ENCODE measurements at regions of chr1 and their contacts with region 1.

Region 1: GRCh38 chr1:221794079-221794670 is 52.3 kb upstream of the DUSP10 start:
- DNase-seq: peak in 1 of 2 donors; percentile 79
- ATAC-seq: peak; percentile 76 to 89 (median 82)
- H3K4me3 ChIP-seq: no peak overlapping the region
- H3K4me3 Mint-ChIP-seq: peak overlapping the region; percentile 65
- H3K27ac ChIP-seq: peak overlapping the region; percentile 57
- H3K27ac Mint-ChIP-seq: peak overlapping the region; percentile 88 to 90
- H3K4me1 ChIP-seq: peaks cover 16% of the 10 kb centered on the region
- H3K4me1 Mint-ChIP-seq: peaks cover 19 to 26% of the 10 kb centered on the region in 2 donors
- H3K27me3 ChIP-seq: no peaks in the 10 kb centered on the region
- H3K27me3 Mint-ChIP-seq: no peaks in the 10 kb centered on the region
- CTCF ChIP-seq: no peak

Region 2: DNA sequence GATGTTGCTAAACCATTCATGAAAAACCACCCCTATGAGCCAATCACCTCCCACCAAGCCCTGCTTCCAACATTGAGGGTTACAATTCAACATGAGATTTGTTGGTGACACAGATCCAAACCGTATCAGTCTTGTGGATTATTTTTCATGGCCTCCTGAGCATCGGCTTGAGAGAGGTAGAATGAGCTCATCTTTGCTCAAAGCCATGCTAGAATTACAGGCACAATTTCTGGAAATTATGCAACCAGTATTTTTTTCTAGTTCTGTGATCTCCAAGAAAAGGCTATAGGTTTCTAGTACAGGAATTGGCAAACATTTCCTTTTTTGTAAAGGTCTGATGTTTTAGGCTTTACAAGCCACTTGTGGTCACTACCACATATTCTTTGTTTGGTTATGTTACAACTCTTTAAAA is 271.6 kb before region 1 on chr1:
- intact Hi-C with region 1: loop called (anchors 5 kb)
- DNase-seq: no peak
- ATAC-seq: peak in 1 of 3 donors; percentile 42
- H3K4me3 ChIP-seq: no peak overlapping the region
- H3K4me3 Mint-ChIP-seq: no peak overlapping the region
- H3K27ac ChIP-seq: no peak overlapping the region
- H3K27ac Mint-ChIP-seq: peak overlapping the region; percentile 89 to 94
- H3K4me1 ChIP-seq: peaks cover 19% of the 10 kb centered on the region
- H3K4me1 Mint-ChIP-seq: peaks cover 24 to 25% of the 10 kb centered on the region in 2 donors
- H3K27me3 ChIP-seq: no peaks in the 10 kb centered on the region
- H3K27me3 Mint-ChIP-seq: no peaks in the 10 kb centered on the region
- CTCF ChIP-seq: no peak

Region 3: DNA sequence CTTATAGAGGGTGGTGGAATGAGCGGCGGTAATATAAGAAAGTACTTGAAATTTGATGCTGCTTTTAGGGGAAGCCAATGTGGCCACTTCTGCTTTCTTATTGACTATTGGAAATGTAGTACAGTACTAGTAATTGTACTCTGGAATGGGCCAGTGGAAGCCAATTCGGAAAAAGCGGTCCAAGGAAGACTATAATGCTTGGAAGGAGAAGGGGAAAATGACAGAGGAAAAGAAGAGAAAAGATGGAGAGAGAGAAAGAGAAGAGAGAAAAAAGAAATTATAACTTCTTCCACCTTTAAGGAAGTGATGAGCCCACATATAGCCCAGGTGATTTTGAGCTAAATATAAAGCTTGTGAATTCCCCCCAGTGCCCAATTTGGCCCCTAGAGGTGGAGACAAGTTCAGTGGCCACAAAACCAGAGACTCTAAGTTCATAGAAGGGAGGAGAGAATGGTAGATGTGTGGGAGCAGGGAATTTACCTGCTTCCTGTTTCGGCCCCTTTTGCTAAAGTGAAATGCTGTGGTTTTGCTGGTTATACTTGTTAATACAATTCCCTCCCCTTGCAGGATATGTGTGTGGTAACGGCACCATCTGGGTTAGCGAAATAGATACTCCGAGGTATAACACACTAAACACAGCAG is 16.6 kb before region 1 on chr1:
- intact Hi-C with region 1: loop called (anchors 1 kb)
- DNase-seq: peak; percentile 42 to 88
- ATAC-seq: peak; percentile 63 to 85 (median 81)
- H3K4me3 ChIP-seq: no peak overlapping the region
- H3K4me3 Mint-ChIP-seq: peak overlapping the region; percentile 68
- H3K27ac ChIP-seq: peak overlapping the region; percentile 84
- H3K27ac Mint-ChIP-seq: peak overlapping the region; percentile 90 to 99
- H3K4me1 ChIP-seq: peaks cover 62% of the 10 kb centered on the region
- H3K4me1 Mint-ChIP-seq: peaks cover 67 to 71% of the 10 kb centered on the region in 2 donors
- H3K27me3 ChIP-seq: no peaks in the 10 kb centered on the region
- H3K27me3 Mint-ChIP-seq: no peaks in the 10 kb centered on the region
- CTCF ChIP-seq: no peak

Region 4: GRCh38 chr1:221809031-221810029 is 15.2 kb after region 1 on chr1:
- intact Hi-C with region 1: loop called (anchors 2 kb)
- DNase-seq: peak in 1 of 2 donors; percentile 45
- ATAC-seq: peak; percentile 73 to 88 (median 88)
- H3K4me3 ChIP-seq: no peak overlapping the region
- H3K4me3 Mint-ChIP-seq: peak overlapping the region; percentile 2
- H3K27ac ChIP-seq: no peak overlapping the region
- H3K27ac Mint-ChIP-seq: peak overlapping the region; percentile 44 to 71
- H3K4me1 ChIP-seq: peaks cover 12% of the 10 kb centered on the region
- H3K4me1 Mint-ChIP-seq: peaks cover 35 to 36% of the 10 kb centered on the region in 2 donors
- H3K27me3 ChIP-seq: no peaks in the 10 kb centered on the region
- H3K27me3 Mint-ChIP-seq: no peaks in the 10 kb centered on the region
- CTCF ChIP-seq: no peak

Region 5: GRCh38 chr1:221839796-221840395 is 45.7 kb after region 1 on chr1:
- intact Hi-C with region 1: loop called (anchors 1 kb)
- DNase-seq: peak; percentile 82 to 86
- ATAC-seq: peak; percentile 82 to 94 (median 93)
- H3K4me3 ChIP-seq: no peak overlapping the region
- H3K4me3 Mint-ChIP-seq: peak overlapping the region; percentile 13
- H3K27ac ChIP-seq: peak overlapping the region; percentile 34
- H3K27ac Mint-ChIP-seq: peak overlapping the region; percentile 89 to 92
- H3K4me1 ChIP-seq: peaks cover 28% of the 10 kb centered on the region
- H3K4me1 Mint-ChIP-seq: peaks cover 37 to 43% of the 10 kb centered on the region in 2 donors
- H3K27me3 ChIP-seq: no peaks in the 10 kb centered on the region
- H3K27me3 Mint-ChIP-seq: peaks cover 0 to 3% of the 10 kb centered on the region in 2 donors
- CTCF ChIP-seq: no peak

Measured in natural killer cell (primary cell).